Right ventricle myocardium inferior (tissue), 1 donor: ENCODE measurements at regions of chr21 and their contacts with region 1.

Region 1: GRCh38 chr21:27759820-27760219 is 792.9 kb upstream of the ADAMTS5 start:
- DNase-seq: no peak
- ATAC-seq: no peak

Region 2: DNA sequence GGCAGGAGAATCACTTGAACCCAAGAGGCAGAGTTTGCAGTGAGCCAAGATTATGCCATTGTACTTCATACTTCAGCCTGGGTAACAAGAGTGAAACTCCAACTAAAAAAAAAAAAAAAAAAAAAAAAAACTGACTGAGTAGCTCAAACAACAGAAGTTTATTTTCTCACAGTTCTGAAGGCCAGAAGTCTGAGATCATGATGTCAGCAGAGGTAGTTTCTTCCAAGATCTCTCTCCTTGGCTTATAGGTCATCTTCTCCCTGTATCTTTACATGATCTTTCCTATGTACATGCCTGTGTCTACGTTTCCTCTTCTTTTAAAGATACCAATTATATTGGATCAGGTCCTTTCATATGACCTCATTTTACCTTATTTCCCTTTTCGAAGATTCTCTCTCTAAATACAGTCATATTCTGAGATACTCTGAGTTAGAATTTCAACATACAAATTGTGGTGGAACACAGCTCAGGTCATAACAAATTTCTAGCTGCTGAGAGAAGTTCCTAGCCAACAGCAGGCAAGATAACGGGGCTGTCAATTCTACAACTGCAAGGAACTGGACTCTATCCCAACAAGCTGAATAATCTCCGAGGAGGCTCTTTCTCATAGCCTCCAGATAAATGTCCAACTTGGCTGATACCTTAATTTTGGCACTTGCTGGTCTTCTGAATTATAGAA is 605.2 kb before region 1 on chr21:
- intact Hi-C with region 1: no loop called
- DNase-seq: no peak
- ATAC-seq: peak; percentile 91

Region 3: GRCh38 chr21:27505516-27505915 is 254.3 kb before region 1 on chr21:
- intact Hi-C with region 1: no loop called
- DNase-seq: no peak
- ATAC-seq: no peak

Region 4: DNA sequence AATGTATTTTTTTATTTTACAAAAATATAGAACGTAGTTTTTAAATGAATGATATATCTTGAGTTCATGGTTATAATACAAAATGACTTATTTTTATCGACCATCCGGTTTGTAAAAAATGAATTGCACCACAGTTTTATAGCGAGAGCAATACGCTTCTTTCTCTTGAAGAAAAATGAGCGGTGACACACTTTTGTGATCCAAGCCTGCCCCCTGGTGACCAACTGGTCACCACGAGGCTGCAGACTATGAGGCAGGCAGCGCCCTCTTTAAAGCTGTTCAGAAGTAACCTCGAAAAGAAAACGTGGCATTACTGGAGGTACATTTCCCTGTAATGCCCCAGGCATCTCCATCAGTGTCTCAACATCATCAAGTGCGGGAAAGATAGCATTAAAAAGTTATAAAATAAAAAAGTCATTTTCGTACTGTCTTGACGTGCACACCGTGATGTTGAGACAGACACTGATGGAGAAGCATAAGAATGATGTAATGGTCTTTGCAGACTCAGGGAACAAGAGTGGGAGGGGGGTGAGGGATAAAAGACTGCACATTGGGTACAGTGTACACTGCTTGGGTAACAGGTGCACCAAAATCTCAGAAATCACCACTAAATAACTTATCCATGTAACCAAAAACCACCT is 58.7 kb before region 1 on chr21:
- intact Hi-C with region 1: no loop called
- DNase-seq: peak; percentile 82
- ATAC-seq: peak; percentile 93

Region 5: GRCh38 chr21:28516991-28517592 is 757.3 kb after region 1 on chr21:
- intact Hi-C with region 1: loop called (anchors 10 kb)
- DNase-seq: peak; percentile 64
- ATAC-seq: peak; percentile 92